BJ (cell line): ENCODE measurements at regions of chr6 and their contacts with region 1.

Region 1: GRCh38 chr6:29737707-29738630 is 14.7 kb downstream of the HLA-F start:
- DNase-seq: no peak
- H3K4me3 ChIP-seq: no peak overlapping the region
- H3K27me3 ChIP-seq: no peaks in the 10 kb centered on the region
- CTCF ChIP-seq: peak; percentile 81

Region 2: DNA sequence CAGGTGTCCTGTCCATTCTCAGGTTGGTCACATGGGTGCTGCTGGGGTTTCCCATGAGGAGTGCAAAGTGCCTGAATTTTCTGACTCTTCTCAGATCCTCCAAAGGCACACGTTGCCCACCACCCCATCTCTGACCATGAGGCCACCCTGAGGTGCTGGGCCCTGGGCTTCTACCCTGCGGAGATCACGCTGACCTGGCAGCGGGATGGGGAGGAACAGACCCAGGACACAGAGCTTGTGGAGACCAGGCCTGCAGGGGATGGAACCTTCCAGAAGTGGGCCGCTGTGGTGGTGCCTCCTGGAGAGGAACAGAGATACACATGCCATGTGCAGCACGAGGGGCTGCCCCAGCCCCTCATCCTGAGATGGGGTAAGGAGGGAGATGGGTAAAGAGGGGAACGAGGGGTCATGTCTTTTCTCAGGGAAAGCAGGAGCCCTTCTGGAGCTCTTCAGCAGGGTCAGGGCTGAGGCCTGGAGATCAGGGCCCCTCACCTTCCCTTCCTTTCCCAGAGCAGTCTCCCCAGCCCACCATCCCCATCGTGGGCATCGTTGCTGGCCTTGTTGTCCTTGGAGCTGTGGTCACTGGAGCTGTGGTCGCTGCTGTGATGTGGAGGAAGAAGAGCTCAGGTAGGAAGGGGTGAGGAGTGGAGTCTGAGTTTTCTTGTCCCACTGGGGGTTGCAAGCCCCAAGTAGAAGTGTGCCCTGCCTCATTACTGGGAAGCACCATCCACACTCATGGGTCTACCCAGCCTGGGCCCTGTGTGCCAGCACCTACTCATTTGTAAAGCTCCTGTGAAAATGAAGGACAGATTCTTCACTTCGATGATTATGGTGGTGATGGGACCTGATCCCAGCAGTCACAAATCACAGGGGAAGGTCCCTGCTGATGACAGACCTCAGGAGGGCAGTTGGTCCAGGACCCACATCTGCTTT is 12.8 kb before region 1 on chr6:
- CTCF ChIA-PET with region 1: interaction called, 20 read pairs
- POLR2A ChIA-PET with region 1: no interaction called
- DNase-seq: no peak
- H3K4me3 ChIP-seq: no peak overlapping the region
- H3K27me3 ChIP-seq: no peaks in the 10 kb centered on the region
- CTCF ChIP-seq: no peak

Region 3: DNA sequence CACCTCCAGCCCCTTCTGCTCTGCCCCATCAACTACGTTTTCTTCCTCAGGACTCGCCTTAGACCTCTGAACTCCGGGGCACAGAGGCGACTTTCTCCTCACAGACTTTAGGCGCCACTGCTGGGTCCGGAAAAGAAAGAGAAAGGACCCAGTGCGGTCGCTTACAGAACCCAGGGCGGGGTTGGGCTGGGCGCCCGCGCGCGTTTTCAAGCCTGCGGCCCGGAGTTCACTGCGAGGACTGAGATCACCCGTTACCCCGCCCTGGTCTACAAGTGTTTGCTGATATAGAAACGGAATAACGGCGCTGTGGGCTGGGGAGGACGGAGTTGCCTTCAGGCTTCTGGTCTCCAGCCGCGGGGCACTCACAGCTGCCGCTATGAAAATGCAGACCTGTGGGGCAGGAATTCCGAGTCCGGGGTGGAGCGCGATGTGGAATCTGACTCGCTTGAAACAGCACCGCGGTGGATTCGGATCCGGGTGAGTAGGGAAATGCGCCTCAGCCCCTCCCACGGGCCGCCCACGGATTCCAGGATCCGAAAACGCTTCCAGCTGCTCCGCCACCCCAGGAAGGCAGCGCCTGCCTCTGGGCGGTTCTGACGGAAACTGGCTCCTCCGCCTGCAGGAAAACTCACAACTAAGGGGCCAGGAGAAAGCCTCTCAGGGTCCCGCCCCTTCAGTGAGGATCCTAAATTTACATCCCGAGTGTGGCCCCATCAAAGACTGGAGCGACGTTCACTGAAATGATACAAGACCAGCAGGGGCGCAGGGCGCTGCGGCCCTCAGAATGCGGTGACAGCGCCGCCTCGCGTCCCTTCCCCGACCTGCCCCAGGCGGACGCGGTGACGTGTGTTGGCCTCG is 14.7 kb after region 1 on chr6:
- CTCF ChIA-PET with region 1: interaction called, 62 read pairs
- POLR2A ChIA-PET with region 1: no interaction called
- DNase-seq: peak; percentile 59
- H3K4me3 ChIP-seq: peak overlapping the region; percentile 69
- H3K27me3 ChIP-seq: peaks cover 10% of the 10 kb centered on the region
- CTCF ChIP-seq: peak; percentile 100

Region 4: DNA sequence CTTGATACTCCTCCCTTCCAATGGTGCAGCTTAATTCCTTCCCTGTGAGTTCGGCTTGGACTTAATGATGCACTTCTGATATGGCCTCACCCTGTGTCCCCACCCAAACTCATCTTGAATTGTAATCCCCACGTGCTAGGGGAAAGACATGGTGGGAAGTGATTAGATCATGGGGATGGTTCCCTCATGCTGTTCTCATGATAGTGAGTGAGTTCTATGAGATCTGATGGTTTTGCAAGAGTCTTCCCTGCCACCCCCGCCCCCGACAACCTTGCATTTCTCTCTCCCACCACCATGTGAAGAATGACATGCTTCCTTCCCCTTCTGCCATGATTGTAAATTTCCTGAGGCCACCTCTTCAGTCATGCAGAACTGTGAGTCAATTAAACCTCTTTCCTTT is 39.3 kb after region 1 on chr6:
- CTCF ChIA-PET with region 1: no interaction called
- POLR2A ChIA-PET with region 1: no interaction called
- DNase-seq: no peak
- H3K4me3 ChIP-seq: no peak overlapping the region
- H3K27me3 ChIP-seq: no peaks in the 10 kb centered on the region; the same call in 1 of the 2 replicates
- CTCF ChIP-seq: no peak

Region 5: GRCh38 chr6:29834564-29835436 is 96.8 kb after region 1 on chr6:
- CTCF ChIA-PET with region 1: interaction called, 71 read pairs
- POLR2A ChIA-PET with region 1: no interaction called
- DNase-seq: no peak
- H3K4me3 ChIP-seq: no peak overlapping the region
- H3K27me3 ChIP-seq: peaks cover 11% of the 10 kb centered on the region
- CTCF ChIP-seq: peak; percentile 86